ENCODE measurements at regions of chr5 and their contacts with region 1.

Region 1: DNA sequence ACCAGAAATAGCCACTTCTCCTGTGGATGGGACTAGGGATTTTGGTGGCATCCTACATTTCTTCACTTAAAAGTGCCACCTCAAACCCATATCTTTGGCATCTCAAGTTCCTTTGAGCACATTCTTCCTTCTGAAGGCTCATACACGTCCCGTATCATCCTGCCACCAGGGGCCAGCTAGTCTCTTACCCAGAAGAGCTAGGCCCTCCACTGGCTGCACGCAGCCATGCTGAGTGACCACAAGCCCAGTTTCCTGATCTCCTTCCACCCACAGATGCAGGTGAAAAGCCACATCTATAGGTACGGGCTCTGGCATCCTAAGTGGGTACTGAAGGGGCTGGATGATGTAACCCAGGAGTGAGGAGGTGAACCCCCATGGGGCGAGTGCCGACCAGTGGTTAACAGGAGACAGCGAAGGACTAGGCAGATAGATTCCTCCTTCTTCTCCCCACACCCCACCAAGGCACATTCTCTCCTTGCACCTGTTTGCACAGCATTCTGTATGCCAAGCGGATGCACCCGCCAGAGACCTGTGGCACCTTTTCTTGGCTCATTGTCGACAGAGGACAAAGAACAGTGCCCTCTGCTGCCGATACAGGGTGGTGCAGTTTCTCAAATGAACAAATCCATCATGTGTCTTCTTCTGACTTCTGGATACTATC is 14.4 kb upstream of the SCGB3A1 start:
- DNase-seq: peak; percentile 79
- H3K4me3 Mint-ChIP-seq: no peak overlapping the region
- H3K27ac Mint-ChIP-seq: no peak overlapping the region
- H3K4me1 Mint-ChIP-seq: no peaks in the 10 kb centered on the region
- H3K27me3 Mint-ChIP-seq: no peaks in the 10 kb centered on the region

Region 2: DNA sequence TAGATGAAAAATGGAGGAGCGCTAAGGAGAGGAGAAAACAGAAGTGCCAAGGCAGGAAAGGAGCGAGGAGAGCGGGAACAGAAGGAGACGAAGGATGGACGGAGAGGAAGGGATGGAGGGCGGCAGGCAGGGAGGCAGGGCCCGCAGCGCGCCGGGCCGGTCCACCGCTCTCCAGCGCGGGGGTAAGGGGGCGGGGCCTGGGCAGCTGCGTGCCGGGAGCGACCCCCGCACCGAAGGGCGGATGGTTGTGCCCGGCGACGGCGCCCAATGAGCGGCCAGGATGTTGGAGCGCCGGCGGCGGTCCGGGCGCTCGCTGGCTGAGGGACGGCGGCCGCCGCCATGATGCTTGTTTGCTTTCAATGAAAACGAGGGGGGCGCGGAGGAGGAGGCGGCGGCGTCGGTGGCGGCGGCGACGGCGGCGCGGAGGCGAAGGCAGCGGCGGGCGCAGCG is 111.6 kb before region 1 on chr5 and contains the start of gene CNOT6:
- CTCF ChIA-PET with region 1: no interaction called
- POLR2A ChIA-PET with region 1: no interaction called
- intact Hi-C with region 1: loop called (anchors 10 kb)
- DNase-seq: peak; percentile 95
- H3K4me3 Mint-ChIP-seq: peak within 1 kb of the TSS; percentile 84
- H3K27ac Mint-ChIP-seq: peak within 1 kb of the TSS; percentile 82
- H3K4me1 Mint-ChIP-seq: peaks cover 32% of the 10 kb centered on the region
- H3K27me3 Mint-ChIP-seq: no peaks in the 10 kb centered on the region
- total RNA-seq, gene CNOT6: 32.0 to 35.2 TPM

Region 3: DNA sequence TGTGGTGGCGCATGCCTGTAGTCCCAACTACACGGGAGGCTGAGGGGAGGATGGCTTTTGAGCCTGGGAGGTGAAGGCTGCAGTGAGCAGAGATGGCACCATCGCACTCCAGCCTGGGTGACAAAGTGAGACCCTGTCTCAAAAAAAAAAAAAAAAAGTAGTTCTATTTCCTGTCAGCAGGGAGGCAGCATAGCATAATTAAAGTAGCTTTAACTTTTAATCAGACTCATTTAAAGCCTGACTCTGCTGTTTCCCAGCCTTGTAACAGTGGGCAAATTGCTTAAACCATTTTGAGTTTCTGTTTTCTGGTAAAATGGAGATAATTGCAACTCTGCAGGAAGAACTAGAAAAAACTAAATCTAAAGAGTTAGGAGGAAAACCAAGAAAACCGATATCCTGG is 80.3 kb before region 1 on chr5:
- CTCF ChIA-PET with region 1: interaction called, 11 read pairs
- POLR2A ChIA-PET with region 1: no interaction called
- intact Hi-C with region 1: loop called (anchors 1 kb)
- DNase-seq: no peak
- H3K4me3 Mint-ChIP-seq: no peak overlapping the region
- H3K27ac Mint-ChIP-seq: no peak overlapping the region
- H3K4me1 Mint-ChIP-seq: peaks cover 52% of the 10 kb centered on the region
- H3K27me3 Mint-ChIP-seq: no peaks in the 10 kb centered on the region

Region 4: DNA sequence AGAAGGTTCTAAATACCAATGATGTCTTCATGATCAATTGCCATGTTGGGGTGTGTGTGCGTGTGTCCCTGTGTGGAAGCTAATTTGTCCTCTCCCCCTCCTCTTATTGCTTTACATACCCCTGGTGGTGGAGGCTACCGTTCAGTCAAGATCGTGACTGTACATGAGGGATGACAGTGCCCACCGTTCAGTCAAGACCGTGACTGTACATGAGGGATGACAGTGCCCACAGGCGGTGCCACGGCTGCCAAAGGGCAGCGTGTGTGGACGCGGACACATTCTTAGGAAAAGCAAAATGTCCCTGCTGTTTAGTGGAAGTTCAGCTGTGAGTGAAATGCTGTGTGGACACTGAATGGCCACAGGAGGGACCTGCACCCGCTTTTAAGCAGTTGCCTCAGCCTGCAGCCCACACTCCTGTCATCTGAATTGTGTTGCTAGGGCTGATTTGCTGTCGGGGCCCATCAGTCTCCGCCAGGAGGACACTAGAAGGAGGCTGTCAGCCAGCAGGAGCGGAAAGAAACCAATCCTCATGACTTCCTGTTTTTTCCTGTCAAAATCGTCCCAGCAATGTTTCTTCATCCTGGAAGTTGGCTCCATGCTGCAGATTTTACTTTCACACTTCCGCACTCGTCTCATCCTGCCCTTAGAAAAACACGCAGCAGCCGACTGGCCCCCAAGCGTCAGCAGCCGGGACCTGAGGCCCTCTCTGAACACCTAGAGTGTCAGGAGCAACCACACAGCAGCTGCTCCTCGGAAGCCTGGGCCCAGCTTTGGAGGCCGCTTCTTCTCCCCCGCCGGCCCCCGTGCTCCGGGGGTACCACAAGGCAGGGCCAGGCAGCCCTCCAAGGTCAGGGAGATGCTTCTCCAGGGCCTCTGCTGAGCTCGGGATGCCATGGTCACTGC is 516.2 kb after region 1 on chr5:
- CTCF ChIA-PET with region 1: no interaction called
- POLR2A ChIA-PET with region 1: no interaction called
- intact Hi-C with region 1: no loop called
- DNase-seq: no peak
- H3K4me3 Mint-ChIP-seq: no peak overlapping the region
- H3K27ac Mint-ChIP-seq: no peak overlapping the region
- H3K4me1 Mint-ChIP-seq: no peaks in the 10 kb centered on the region
- H3K27me3 Mint-ChIP-seq: peaks cover 68% of the 10 kb centered on the region

Measured in activated CD4-positive, alpha-beta memory T cell treated with anti-CD3 and anti-CD28 coated beads for 36 hours (primary cell).